Transverse colon (tissue), 4 donors: ENCODE measurements at regions of chr5 and their contacts with region 1.

Region 1: DNA sequence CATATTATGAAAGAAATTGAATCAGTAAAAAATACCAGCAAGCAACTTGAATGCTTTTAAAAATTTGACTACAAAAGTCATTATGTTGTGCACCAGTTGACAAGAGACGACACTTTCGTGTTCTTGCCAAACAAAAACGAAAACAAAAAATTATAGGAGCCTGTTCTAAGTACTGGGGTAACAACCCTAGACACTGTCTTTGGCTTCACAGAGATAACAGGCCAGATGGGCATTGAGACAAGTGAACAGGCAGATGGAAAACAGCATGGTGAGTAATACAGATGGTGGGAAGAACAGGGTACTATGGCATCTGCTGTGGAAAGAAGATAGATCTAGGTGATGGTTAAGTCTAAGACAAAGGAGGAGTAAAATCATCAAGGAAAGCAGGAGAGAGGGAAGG is 99.0 kb downstream of the CDH12 start:
- DNase-seq: no peak
- H3K4me3 ChIP-seq: no peak overlapping the region
- H3K27ac ChIP-seq: no peak overlapping the region
- H3K4me1 ChIP-seq: no peaks in the 10 kb centered on the region
- H3K27me3 ChIP-seq: no peaks in the 10 kb centered on the region
- CTCF ChIP-seq: no peak
- EP300 ChIP-seq: no peak
- POLR2A ChIP-seq: no peak

Region 2: DNA sequence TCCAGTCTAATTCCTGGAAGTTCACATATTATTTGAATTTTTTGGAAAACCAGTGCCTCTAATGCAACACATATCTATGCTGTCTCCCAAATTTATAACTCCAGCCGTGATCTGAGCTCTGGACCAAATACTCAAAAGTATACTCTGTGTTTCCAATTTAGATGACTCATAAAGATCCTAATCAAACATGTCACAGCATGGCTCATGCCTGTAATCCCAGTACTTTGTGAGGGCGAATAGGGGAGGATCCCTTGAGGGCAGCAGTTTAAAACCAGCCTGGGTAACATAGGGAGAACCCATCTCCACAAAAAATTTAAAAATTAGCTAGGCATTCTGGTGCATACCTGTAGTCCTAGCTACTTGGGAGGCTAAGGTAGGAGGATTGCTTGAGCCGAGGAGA is 289.0 kb before region 1 on chr5:
- in situ Hi-C with region 1: no loop called
- intact Hi-C with region 1: no loop called
- DNase-seq: no peak
- H3K4me3 ChIP-seq: no peak overlapping the region
- H3K27ac ChIP-seq: no peak overlapping the region
- H3K4me1 ChIP-seq: no peaks in the 10 kb centered on the region
- H3K27me3 ChIP-seq: no peaks in the 10 kb centered on the region
- CTCF ChIP-seq: no peak
- EP300 ChIP-seq: no peak
- POLR2A ChIP-seq: no peak

Region 3: DNA sequence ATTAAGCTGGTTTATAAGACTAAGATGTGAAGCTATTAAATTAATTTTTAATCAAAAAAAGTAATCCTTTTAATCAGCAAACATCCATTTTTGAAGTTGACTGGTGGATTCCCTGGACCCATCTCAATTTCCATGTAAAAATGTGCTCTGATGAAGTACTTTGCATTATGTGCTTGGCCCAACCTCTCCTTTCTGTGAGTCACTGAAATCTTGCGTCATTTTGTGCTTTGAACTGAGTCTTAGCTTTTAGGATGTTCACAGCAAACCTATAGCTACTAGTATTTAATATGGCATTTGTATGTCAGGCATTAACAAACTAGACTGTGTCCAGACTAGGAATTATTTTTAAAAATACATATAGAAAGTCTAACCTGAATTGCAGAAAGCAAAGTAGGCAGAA is 154.0 kb after region 1 on chr5:
- in situ Hi-C with region 1: no loop called
- intact Hi-C with region 1: no loop called
- DNase-seq: no peak
- H3K4me3 ChIP-seq: no peak overlapping the region
- H3K27ac ChIP-seq: no peak overlapping the region
- H3K4me1 ChIP-seq: no peaks in the 10 kb centered on the region
- H3K27me3 ChIP-seq: no peaks in the 10 kb centered on the region
- CTCF ChIP-seq: no peak
- EP300 ChIP-seq: no peak
- POLR2A ChIP-seq: no peak

Region 4: DNA sequence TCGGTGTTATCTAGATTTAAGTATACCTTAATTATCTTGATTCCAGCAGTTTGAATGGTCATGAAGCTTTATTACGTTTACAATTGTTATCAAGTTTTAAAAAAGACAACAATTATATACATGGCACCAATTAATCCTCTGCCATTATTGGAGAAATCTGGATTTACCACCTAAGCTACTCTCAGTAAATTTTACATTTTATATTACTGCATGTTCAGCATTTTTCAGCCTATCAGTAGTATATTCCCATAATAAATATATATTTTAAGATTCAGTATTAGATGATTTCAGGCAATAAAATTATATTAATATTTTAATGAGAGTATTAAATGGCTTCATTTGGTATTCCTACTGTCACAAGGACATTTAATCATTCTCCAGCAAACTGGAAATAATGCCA is 488.7 kb after region 1 on chr5:
- in situ Hi-C with region 1: no loop called
- intact Hi-C with region 1: loop called (anchors 5 kb)
- DNase-seq: no peak
- H3K4me3 ChIP-seq: no peak overlapping the region
- H3K27ac ChIP-seq: no peak overlapping the region
- H3K4me1 ChIP-seq: no peaks in the 10 kb centered on the region
- H3K27me3 ChIP-seq: no peaks in the 10 kb centered on the region
- CTCF ChIP-seq: no peak
- EP300 ChIP-seq: no peak
- POLR2A ChIP-seq: no peak